ENCODE measurements at regions of chr15 and their contacts with region 1.

Region 1: GRCh38 chr15:40108855-40109735 is at the start of gene BMF:
- DNase-seq: peak; percentile 84
- ATAC-seq: peak; percentile 60
- H3K4me3 ChIP-seq: peak within 1 kb of the TSS; percentile 73
- H3K27ac ChIP-seq: peak within 1 kb of the TSS; percentile 96
- H3K4me1 ChIP-seq: peaks cover 54% of the 10 kb centered on the region
- H3K27me3 ChIP-seq: no peaks in the 10 kb centered on the region
- CTCF ChIP-seq: peak in 2 of 3 experiments; percentile 19 to 39; a peak in 3 of 6 replicates
- EP300 ChIP-seq: 0 out of 4 replicates have a peak, but pooled peaks of 1 of the 2 experiments have one; percentile 21
- POLR2A ChIP-seq: peak; percentile 49; the same call in 1 of the 2 replicates
- RAD21 ChIP-seq: peak; percentile 33
- polyA plus RNA-seq, gene BMF: 0.82 to 1.3 TPM

Region 2: DNA sequence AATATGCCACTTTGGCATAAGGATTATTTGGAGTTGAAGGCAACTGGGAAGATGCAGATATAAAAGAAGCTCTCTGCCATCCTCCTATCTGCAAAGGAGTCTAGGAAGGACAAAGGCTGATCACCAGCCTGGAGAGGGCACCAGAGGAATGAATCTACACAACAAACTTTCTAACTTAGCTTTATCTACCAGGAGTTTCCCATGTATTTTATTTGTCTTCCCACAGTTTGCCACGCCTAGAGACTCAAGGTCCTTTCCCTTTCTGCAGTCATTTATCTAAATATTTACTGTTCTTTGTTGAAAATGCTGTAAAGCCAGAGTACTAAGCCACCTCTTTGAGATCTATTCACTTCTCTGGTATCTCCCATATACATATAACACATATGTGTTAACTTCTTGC is 221.3 kb before region 1 on chr15:
- CTCF ChIA-PET with region 1: interaction called, 6 read pairs
- POLR2A ChIA-PET with region 1: no interaction called
- RAD21 ChIA-PET with region 1: interaction called, 11 read pairs
- SMC1A ChIA-PET with region 1: interaction called, 8 read pairs
- in situ Hi-C with region 1: no loop called
- intact Hi-C with region 1: no loop called
- DNase-seq: no peak
- ATAC-seq: peak; percentile 75
- H3K4me3 ChIP-seq: no peak overlapping the region
- H3K27ac ChIP-seq: no peak overlapping the region
- H3K4me1 ChIP-seq: no peaks in the 10 kb centered on the region
- H3K27me3 ChIP-seq: no peaks in the 10 kb centered on the region; a peak in 1 of 4 replicates
- CTCF ChIP-seq: peak; percentile 20 to 55 (median 35); a peak in 4 of 6 replicates
- EP300 ChIP-seq: no peak
- POLR2A ChIP-seq: no peak
- RAD21 ChIP-seq: peak; percentile 26; the same call in 1 of the 2 replicates

Region 3: GRCh38 chr15:40038638-40039543 is 70.2 kb before region 1 on chr15 and contains the start of gene SRP14:
- CTCF ChIA-PET with region 1: interaction called, 776 read pairs
- POLR2A ChIA-PET with region 1: interaction called, 307 read pairs
- RAD21 ChIA-PET with region 1: interaction called, 903 read pairs
- SMC1A ChIA-PET with region 1: interaction called, 1,082 read pairs
- in situ Hi-C with region 1: no loop called
- intact Hi-C with region 1: no loop called
- DNase-seq: peak; percentile 75
- ATAC-seq: peak; percentile 95
- H3K4me3 ChIP-seq: peak within 1 kb of the TSS; percentile 89
- H3K27ac ChIP-seq: peak within 1 kb of the TSS; percentile 79
- H3K4me1 ChIP-seq: peaks cover 9% of the 10 kb centered on the region
- H3K27me3 ChIP-seq: no peaks in the 10 kb centered on the region
- CTCF ChIP-seq: 0 out of 6 replicates have a peak, but pooled peaks of 1 of the 3 experiments have one; percentile 1
- EP300 ChIP-seq: 0 out of 4 replicates have a peak, but pooled peaks of 1 of the 2 experiments have one; percentile 3
- POLR2A ChIP-seq: peak; percentile 98
- RAD21 ChIP-seq: no peak
- polyA plus RNA-seq, gene SRP14: 1,041 to 1,182 TPM

Region 4: DNA sequence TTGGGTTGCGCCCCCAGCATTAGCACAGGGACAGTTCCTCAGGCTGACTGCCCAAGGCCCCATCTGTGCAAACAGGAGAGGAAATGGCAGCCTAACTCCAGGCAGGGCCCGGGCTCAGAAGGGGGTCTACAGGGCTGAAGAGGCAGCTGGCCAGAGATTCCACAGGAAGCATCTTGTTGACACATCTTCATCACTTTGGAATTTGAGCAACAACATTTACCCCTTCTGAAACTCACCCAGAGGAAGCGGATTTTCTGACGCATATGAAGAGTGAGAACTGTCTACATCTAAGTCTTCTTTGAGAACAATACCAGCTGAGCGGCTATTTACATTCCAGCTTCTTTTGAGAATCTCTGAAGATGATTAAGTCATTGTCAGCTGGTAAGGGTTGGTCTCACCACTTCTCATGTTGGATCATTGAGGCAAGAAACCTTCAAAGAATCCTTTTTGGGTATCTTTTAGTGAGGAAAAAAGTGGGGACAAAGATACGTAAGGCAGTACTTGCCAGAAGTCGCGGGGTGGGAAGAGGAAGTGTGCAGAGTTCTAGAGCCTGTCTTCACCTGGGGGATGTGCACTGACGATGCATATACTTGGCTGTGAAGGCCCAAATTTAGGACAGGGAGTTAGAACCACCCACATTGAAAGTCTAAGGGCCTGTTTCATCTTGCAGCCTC is 44.7 kb before region 1 on chr15:
- CTCF ChIA-PET with region 1: interaction called, 578 read pairs
- POLR2A ChIA-PET with region 1: interaction called, 208 read pairs
- RAD21 ChIA-PET with region 1: interaction called, 509 read pairs
- SMC1A ChIA-PET with region 1: interaction called, 981 read pairs
- in situ Hi-C with region 1: loop called (anchors 10 kb)
- intact Hi-C with region 1: loop called (anchors 2 kb)
- DNase-seq: no peak
- ATAC-seq: peak; percentile 59
- H3K4me3 ChIP-seq: peak overlapping the region; percentile 31; the same call in 1 of the 2 replicates
- H3K27ac ChIP-seq: peak overlapping the region; percentile 96
- H3K4me1 ChIP-seq: peaks cover 75% of the 10 kb centered on the region
- H3K27me3 ChIP-seq: no peaks in the 10 kb centered on the region
- CTCF ChIP-seq: no peak
- EP300 ChIP-seq: peak; percentile 37 to 51; a peak in 1 of 4 replicates
- POLR2A ChIP-seq: no peak; the same call in 1 of the 2 replicates
- RAD21 ChIP-seq: no peak; the same call in 1 of the 2 replicates

Region 5: GRCh38 chr15:40087991-40088928 is 20.8 kb before region 1 on chr15:
- CTCF ChIA-PET with region 1: interaction called, 126 read pairs
- POLR2A ChIA-PET with region 1: interaction called, 5 read pairs
- RAD21 ChIA-PET with region 1: interaction called, 11 read pairs
- SMC1A ChIA-PET with region 1: interaction called, 981 read pairs
- in situ Hi-C with region 1: no loop called
- intact Hi-C with region 1: no loop called
- DNase-seq: no peak
- ATAC-seq: no peak; the same call in 2 of the 3 replicates
- H3K4me3 ChIP-seq: no peak overlapping the region
- H3K27ac ChIP-seq: no peak overlapping the region
- H3K4me1 ChIP-seq: peaks cover 12% of the 10 kb centered on the region
- H3K27me3 ChIP-seq: no peaks in the 10 kb centered on the region
- CTCF ChIP-seq: no peak
- EP300 ChIP-seq: no peak
- POLR2A ChIP-seq: peak; percentile 56; the same call in 1 of the 2 replicates
- RAD21 ChIP-seq: no peak

Region 6: DNA sequence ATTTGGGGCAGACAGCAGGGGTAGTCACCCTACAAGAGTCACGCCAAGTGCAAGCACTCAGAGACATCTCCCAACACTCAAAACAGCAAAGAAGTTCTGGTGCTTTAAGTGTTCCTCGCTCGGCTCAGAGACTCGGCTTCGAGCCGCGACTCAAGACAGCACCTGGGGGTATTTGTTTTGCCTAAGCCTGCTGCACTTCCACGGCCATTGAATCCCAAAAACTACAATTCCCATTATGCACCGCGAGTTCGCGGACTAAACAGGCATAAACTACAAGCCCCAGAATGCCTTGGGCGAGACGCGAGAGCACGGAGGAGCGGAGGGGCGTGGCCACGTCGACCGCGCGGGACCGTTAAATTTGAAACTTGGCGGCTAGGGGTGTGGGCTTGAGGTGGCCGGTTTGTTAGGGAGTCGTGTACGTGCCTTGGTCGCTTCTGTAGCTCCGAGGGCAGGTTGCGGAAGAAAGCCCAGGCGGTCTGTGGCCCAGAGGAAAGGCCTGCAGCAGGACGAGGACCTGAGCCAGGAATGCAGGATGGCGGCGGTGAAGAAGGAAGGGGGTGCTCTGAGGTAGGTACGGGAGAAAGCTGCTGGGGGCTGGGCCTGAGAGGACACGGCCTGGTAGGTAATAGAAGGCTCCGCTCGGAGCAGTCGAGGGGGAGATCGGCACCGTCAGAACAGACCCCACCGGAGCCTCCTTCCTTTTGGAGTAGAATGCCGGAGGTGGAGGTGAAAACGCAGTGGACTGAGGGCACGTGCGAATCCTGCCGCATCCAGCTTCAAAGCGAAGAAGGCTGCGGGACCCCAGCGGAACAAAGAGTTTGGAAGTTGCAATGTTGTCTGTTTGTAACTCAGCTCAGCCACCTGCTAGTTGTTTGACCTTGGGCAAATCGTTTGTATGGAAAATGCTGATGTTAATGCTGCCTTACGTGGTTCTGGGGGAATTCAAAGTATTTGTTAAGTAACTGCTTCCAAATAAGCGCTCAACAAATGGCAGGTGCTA is 51.9 kb after region 1 on chr15 and contains the start of gene BUB1B:
- CTCF ChIA-PET with region 1: interaction called, 94 read pairs
- POLR2A ChIA-PET with region 1: interaction called, 22 read pairs
- RAD21 ChIA-PET with region 1: interaction called, 88 read pairs
- SMC1A ChIA-PET with region 1: interaction called, 227 read pairs
- in situ Hi-C with region 1: no loop called
- intact Hi-C with region 1: loop called (anchors 2 kb)
- DNase-seq: peak; percentile 88
- ATAC-seq: peak; percentile 88
- H3K4me3 ChIP-seq: peak within 1 kb of the TSS; percentile 91
- H3K27ac ChIP-seq: peak within 1 kb of the TSS; percentile 64
- H3K4me1 ChIP-seq: peaks cover 13% of the 10 kb centered on the region
- H3K27me3 ChIP-seq: no peaks in the 10 kb centered on the region
- CTCF ChIP-seq: no peak
- EP300 ChIP-seq: 0 out of 4 replicates have a peak, but pooled peaks of 1 of the 2 experiments have one; percentile 17
- POLR2A ChIP-seq: peak; percentile 92
- RAD21 ChIP-seq: no peak
- polyA plus RNA-seq, gene BUB1B: 29.1 to 38.6 TPM

Region 7: GRCh38 chr15:40274350-40275274 is 165.5 kb after region 1 on chr15:
- CTCF ChIA-PET with region 1: interaction called, 22 read pairs
- POLR2A ChIA-PET with region 1: interaction called, 3 read pairs
- RAD21 ChIA-PET with region 1: interaction called, 21 read pairs
- SMC1A ChIA-PET with region 1: interaction called, 12 read pairs
- in situ Hi-C with region 1: no loop called
- intact Hi-C with region 1: loop called (anchors 10 kb)
- DNase-seq: peak; percentile 19
- ATAC-seq: peak; percentile 78
- H3K4me3 ChIP-seq: no peak overlapping the region
- H3K27ac ChIP-seq: no peak overlapping the region
- H3K4me1 ChIP-seq: peaks cover 6% of the 10 kb centered on the region
- H3K27me3 ChIP-seq: 0 out of 4 replicates have a peak, but pooled peaks cover 0 to 2% of the 10 kb centered on the region in 2 experiments
- CTCF ChIP-seq: peak; percentile 100; a peak in 5 of 6 replicates
- EP300 ChIP-seq: no peak
- POLR2A ChIP-seq: no peak
- RAD21 ChIP-seq: peak; percentile 98

Measured in GM12878 (cell line).